Naive thymus-derived CD4-positive, alpha-beta T cell (primary cell): ENCODE measurements at regions of chr3 and their contacts with region 1.

Region 1: DNA sequence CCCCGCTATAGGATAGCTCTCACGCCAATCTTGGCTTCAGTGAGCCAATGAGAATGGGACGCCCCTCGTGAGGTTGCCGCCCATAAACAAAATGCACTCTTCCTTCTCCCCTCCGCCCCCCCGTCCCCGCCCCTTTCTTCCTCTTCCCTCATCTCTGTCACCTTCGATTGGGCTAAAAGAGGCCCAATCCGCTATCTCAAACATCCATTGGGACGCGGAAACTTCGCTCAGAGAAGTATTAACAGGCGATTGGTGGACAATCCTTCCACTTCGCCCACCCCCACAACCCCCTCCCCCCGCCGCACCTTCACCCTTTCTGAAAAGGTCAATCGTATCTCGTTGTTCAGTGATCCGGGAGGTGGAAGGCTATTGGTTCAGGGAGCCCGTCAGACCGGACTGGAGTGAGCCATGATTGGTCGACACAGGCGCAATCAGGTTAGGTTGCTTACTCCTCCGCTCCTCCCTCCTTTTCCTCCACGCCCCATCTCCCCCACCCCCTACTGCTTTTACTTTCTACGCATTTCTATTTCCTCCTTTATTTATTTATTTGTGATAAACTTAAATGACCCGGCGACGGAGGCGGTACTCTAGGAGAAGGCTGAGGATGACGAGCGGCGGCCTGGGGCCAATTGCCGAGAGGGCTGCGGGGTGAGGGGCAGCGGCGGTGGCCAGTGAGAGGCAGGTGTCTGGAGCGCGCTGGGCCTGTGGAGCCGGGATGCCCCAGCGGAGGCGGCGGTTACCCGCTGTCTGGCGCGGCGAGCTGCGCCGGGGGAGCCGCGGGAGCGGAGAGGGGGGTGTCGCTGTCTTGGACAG is 447 bp upstream of the ZBTB20 start:
- DNase-seq: peak; percentile 84 to 99 (median 98)
- ATAC-seq: peak; percentile 83
- H3K4me3 ChIP-seq: peak overlapping the region; percentile 65
- H3K4me3 Mint-ChIP-seq: peak overlapping the region; percentile 93 to 100 (median 96)
- H3K27ac ChIP-seq: peak overlapping the region; percentile 98
- H3K27ac Mint-ChIP-seq: peak overlapping the region; percentile 97 to 100 (median 100)
- H3K4me1 ChIP-seq: peaks cover 15 to 18% of the 10 kb centered on the region in 2 donors
- H3K4me1 Mint-ChIP-seq: peaks cover 16 to 45% (median 24%) of the 10 kb centered on the region in 7 donors
- H3K27me3 ChIP-seq: no peaks in the 10 kb centered on the region
- H3K27me3 Mint-ChIP-seq: peaks cover 0 to 8% (median 0%) of the 10 kb centered on the region in 5 donors

Region 2: GRCh38 chr3:113514265-113514769 is 1633.2 kb before region 1 on chr3:
- CTCF ChIA-PET with region 1: no interaction called
- POLR2A ChIA-PET with region 1: no interaction called
- intact Hi-C with region 1: loop called in 1 of 2 experiments (anchors 2 kb)
- DNase-seq: no peak
- ATAC-seq: no peak
- H3K4me3 ChIP-seq: peak overlapping the region; percentile 99
- H3K4me3 Mint-ChIP-seq: no peak overlapping the region
- H3K27ac ChIP-seq: peak overlapping the region; percentile 87
- H3K27ac Mint-ChIP-seq: no peak overlapping the region
- H3K4me1 ChIP-seq: peaks cover 7 to 8% of the 10 kb centered on the region in 2 donors
- H3K4me1 Mint-ChIP-seq: peaks cover 6 to 30% (median 27%) of the 10 kb centered on the region in 7 donors
- H3K27me3 ChIP-seq: no peaks in the 10 kb centered on the region
- H3K27me3 Mint-ChIP-seq: peaks cover 10 to 29% (median 15%) of the 10 kb centered on the region in 5 donors

Region 3: GRCh38 chr3:113696658-113697499 is 1450.7 kb before region 1 on chr3:
- CTCF ChIA-PET with region 1: no interaction called
- POLR2A ChIA-PET with region 1: no interaction called
- intact Hi-C with region 1: loop called in 1 of 2 experiments (anchors 1 kb)
- DNase-seq: peak; percentile 96 to 100 (median 99)
- ATAC-seq: peak; percentile 93
- H3K4me3 ChIP-seq: peak overlapping the region; percentile 82
- H3K4me3 Mint-ChIP-seq: no peak overlapping the region
- H3K27ac ChIP-seq: peak overlapping the region; percentile 99
- H3K27ac Mint-ChIP-seq: no peak overlapping the region
- H3K4me1 ChIP-seq: peaks cover 11 to 27% of the 10 kb centered on the region in 2 donors
- H3K4me1 Mint-ChIP-seq: peaks cover 23 to 36% (median 29%) of the 10 kb centered on the region in 7 donors
- H3K27me3 ChIP-seq: no peaks in the 10 kb centered on the region
- H3K27me3 Mint-ChIP-seq: no peaks in the 10 kb centered on the region

Region 4: DNA sequence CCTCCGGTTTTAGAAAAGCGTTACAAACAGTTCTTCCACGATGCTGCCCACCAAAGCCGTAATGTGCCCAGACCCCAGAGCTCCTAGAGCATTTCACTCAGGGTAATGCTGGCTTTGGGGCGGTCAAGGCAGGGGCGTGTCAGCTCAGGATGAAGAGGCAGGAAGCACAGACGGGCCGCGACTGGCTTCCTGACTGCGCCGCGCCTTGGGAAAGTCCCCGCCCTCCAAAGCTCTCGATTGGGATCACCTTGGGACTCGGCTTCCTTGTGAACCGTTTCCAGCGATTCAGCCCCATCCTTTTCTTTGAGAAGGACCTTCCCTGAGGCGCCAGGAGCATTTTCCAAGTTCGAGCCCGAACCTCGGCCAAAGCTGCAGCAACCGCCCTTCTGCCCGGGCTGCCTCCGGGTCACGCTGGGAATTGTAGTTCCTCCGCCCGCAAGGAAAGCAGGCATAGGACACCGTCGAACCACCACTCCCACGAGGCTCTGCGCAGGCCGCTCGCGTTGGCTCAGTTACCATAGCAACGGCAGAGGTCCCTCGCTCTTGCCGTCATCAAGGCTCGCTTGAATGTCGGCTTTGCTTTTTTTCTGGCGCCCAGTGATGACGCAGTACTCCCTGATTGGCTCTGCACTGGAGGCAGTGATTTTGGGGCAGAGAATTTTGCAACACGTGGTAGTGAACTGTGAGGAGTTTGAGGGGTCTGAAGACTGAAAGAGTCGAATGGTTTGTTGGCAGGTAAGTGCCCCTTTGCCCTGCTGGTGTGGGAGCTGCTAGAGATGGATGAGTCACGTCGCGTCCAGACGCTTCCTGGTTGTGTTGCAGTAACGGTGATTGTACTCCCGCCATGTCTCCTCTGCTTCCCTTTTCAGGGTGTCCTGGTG is 1091.2 kb before region 1 on chr3 and contains the starts of genes CCDC191 and QTRT2:
- CTCF ChIA-PET with region 1: no interaction called
- POLR2A ChIA-PET with region 1: interaction called, 3 read pairs
- intact Hi-C with region 1: loop called (anchors 1 kb)
- DNase-seq: peak; percentile 82 to 99 (median 98)
- ATAC-seq: peak; percentile 97
- H3K4me3 ChIP-seq: peak within 1 kb of the TSS; percentile 95
- H3K4me3 Mint-ChIP-seq: peak within 1 kb of the TSS; percentile 91 to 100 (median 98)
- H3K27ac ChIP-seq: peak within 1 kb of the TSS; percentile 91
- H3K27ac Mint-ChIP-seq: peak within 1 kb of the TSS; percentile 87 to 99 (median 97)
- H3K4me1 ChIP-seq: peaks cover 10 to 12% of the 10 kb centered on the region in 2 donors
- H3K4me1 Mint-ChIP-seq: peaks cover 24 to 60% (median 55%) of the 10 kb centered on the region in 7 donors
- H3K27me3 ChIP-seq: no peaks in the 10 kb centered on the region
- H3K27me3 Mint-ChIP-seq: peaks cover 0 to 2% (median 0%) of the 10 kb centered on the region in 5 donors
- total RNA-seq, gene CCDC191: 3.9 to 8.8 (median 5.1) TPM
- total RNA-seq, gene QTRT2: 29.9 to 38.8 (median 33.8) TPM

Region 5: GRCh38 chr3:115099986-115100571 is 47.5 kb before region 1 on chr3:
- CTCF ChIA-PET with region 1: interaction called, 3 read pairs
- POLR2A ChIA-PET with region 1: interaction called, 100 read pairs
- intact Hi-C with region 1: loop called (anchors 1 kb)
- DNase-seq: peak in 7 of 9 donors; percentile 56 to 77 (median 69)
- ATAC-seq: peak; percentile 93
- H3K4me3 ChIP-seq: peak overlapping the region; percentile 57
- H3K4me3 Mint-ChIP-seq: peak overlapping the region; percentile 84 to 95 (median 87)
- H3K27ac ChIP-seq: peak overlapping the region; percentile 62
- H3K27ac Mint-ChIP-seq: peak overlapping the region; percentile 68 to 96 (median 94)
- H3K4me1 ChIP-seq: peaks cover 11 to 12% of the 10 kb centered on the region in 2 donors
- H3K4me1 Mint-ChIP-seq: peaks cover 10 to 77% (median 67%) of the 10 kb centered on the region in 7 donors
- H3K27me3 ChIP-seq: no peaks in the 10 kb centered on the region
- H3K27me3 Mint-ChIP-seq: no peaks in the 10 kb centered on the region

Region 6: GRCh38 chr3:115160295-115160694 is 12.8 kb after region 1 on chr3:
- CTCF ChIA-PET with region 1: interaction called, 10 read pairs
- POLR2A ChIA-PET with region 1: interaction called, 111 read pairs
- intact Hi-C with region 1: loop called (anchors 1 kb)
- DNase-seq: no peak
- ATAC-seq: no peak
- H3K4me3 ChIP-seq: no peak overlapping the region
- H3K4me3 Mint-ChIP-seq: no peak overlapping the region
- H3K27ac ChIP-seq: no peak overlapping the region
- H3K27ac Mint-ChIP-seq: no peak overlapping the region
- H3K4me1 ChIP-seq: peaks cover 17 to 20% of the 10 kb centered on the region in 2 donors
- H3K4me1 Mint-ChIP-seq: peaks cover 14 to 32% (median 25%) of the 10 kb centered on the region in 7 donors
- H3K27me3 ChIP-seq: no peaks in the 10 kb centered on the region
- H3K27me3 Mint-ChIP-seq: no peaks in the 10 kb centered on the region

Region 7: GRCh38 chr3:115658337-115659181 is 511.0 kb after region 1 on chr3:
- CTCF ChIA-PET with region 1: interaction called, 3 read pairs
- POLR2A ChIA-PET with region 1: interaction called, 3 read pairs
- intact Hi-C with region 1: loop called (anchors 1 kb)
- DNase-seq: peak; percentile 49 to 76 (median 62)
- ATAC-seq: peak; percentile 92
- H3K4me3 ChIP-seq: peak overlapping the region; percentile 51
- H3K4me3 Mint-ChIP-seq: peak overlapping the region; percentile 81 to 99 (median 95)
- H3K27ac ChIP-seq: peak overlapping the region; percentile 60
- H3K27ac Mint-ChIP-seq: peak overlapping the region; percentile 90 to 100 (median 98)
- H3K4me1 ChIP-seq: peaks cover 5 to 13% of the 10 kb centered on the region in 2 donors
- H3K4me1 Mint-ChIP-seq: peaks cover 14 to 31% (median 24%) of the 10 kb centered on the region in 7 donors
- H3K27me3 ChIP-seq: no peaks in the 10 kb centered on the region
- H3K27me3 Mint-ChIP-seq: peaks cover 0 to 13% (median 0%) of the 10 kb centered on the region in 5 donors